ENCODE measurements at regions of chr22 and their contacts with region 1.

Region 1: DNA sequence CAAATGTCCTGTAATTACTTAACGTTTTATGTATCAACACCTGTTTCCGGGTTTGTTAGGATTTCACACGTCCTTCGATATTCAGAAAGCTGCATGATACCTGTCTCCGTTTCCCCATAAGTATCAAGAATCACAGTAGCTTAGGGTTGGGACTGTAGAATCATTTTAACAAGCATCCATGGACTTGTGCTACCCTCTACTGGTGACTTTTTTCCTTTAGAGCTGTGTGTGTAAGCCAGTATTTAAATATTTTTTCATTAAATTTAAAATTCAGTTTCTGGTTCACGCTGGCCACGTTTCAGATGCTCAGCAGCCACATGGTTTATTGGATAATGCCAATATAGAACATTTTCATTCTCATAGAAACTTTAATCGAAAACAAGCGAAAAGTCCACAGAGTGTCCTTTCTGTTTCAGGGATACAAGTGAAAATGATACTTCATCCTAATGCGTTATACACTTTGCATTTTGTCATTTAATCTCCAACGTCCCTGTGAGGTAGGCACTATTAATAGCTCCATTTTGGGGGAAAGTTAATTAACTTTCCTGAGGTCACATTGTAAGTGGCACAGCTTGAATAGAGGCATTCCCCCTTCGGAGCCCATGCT is 61.5 kb upstream of the SLC25A18 start:
- DNase-seq: peak; percentile 69
- ATAC-seq: peak; percentile 93
- H3K4me3 ChIP-seq: no peak overlapping the region
- H3K27ac ChIP-seq: no peak overlapping the region
- H3K4me1 ChIP-seq: no peaks in the 10 kb centered on the region
- H3K27me3 ChIP-seq: no peaks in the 10 kb centered on the region
- CTCF ChIP-seq: peak; percentile 55 to 69 (median 68); a peak in 5 of 6 replicates
- POLR2A ChIP-seq: no peak
- RAD21 ChIP-seq: peak; percentile 84

Region 2: DNA sequence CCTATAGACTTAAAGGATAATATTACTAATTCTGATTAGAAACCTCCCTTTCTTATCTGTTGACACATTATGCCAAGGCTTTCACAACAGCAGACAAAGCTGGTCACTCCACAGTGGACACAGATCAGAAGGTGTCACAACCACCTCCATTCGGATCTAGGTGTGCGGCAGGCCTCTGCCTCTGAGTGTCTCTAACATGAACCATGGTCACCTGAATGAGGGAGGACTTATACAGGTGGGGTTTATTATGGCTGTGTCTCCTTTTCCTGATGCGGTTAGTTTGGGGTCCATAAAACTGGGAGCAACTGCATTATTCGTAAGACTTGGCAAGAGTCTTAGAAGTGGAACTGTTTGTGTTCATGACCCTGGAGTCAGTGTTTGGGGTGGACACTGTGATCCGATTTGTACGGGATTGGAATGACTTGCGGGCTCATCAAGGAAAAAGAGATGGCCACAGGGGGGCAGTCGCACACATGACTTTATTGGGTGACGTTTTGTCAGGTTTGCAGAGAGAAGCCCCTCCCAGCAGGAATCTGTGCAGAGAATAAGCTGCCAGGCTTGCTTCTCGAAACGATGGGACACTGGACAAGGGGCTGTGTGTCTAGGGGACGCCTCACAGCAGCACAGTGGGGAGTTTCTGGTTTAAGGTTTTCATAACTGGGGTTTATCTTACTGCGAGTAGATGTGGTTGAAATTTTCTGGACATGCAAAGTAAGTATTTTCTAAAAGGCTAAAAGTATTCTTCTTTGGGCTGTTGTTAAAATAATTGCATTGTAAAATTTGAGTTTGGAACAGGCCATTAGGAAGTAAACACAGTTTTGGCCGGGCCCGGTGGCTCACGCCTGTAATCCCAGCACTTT is 584.4 kb before region 1 on chr22:
- CTCF ChIA-PET with region 1: interaction called, 7 read pairs
- POLR2A ChIA-PET with region 1: no interaction called
- RAD21 ChIA-PET with region 1: no interaction called
- intact Hi-C with region 1: loop called (anchors 5 kb)
- DNase-seq: peak; percentile 65
- ATAC-seq: peak; percentile 95
- H3K4me3 ChIP-seq: no peak overlapping the region
- H3K27ac ChIP-seq: no peak overlapping the region
- H3K4me1 ChIP-seq: peaks cover 4 to 6% of the 10 kb centered on the region in 2 experiments
- H3K27me3 ChIP-seq: peaks cover 9% of the 10 kb centered on the region; the same call in 1 of the 2 replicates
- CTCF ChIP-seq: peak; percentile 41 to 81 (median 79); a peak in 5 of 6 replicates
- POLR2A ChIP-seq: no peak
- RAD21 ChIP-seq: peak; percentile 51; the same call in 1 of the 2 replicates

Region 3: GRCh38 chr22:17077255-17077654 is 424.5 kb before region 1 on chr22:
- CTCF ChIA-PET with region 1: interaction called, 63 read pairs
- POLR2A ChIA-PET with region 1: no interaction called
- RAD21 ChIA-PET with region 1: interaction called, 4 to 9 read pairs
- intact Hi-C with region 1: loop called (anchors 1 kb)
- DNase-seq: no peak
- ATAC-seq: no peak; the same call in 1 of the 2 replicates
- H3K4me3 ChIP-seq: no peak overlapping the region
- H3K27ac ChIP-seq: no peak overlapping the region
- H3K4me1 ChIP-seq: peaks cover 9 to 24% of the 10 kb centered on the region in 2 experiments
- H3K27me3 ChIP-seq: no peaks in the 10 kb centered on the region
- CTCF ChIP-seq: no peak
- POLR2A ChIP-seq: no peak
- RAD21 ChIP-seq: no peak

Region 4: DNA sequence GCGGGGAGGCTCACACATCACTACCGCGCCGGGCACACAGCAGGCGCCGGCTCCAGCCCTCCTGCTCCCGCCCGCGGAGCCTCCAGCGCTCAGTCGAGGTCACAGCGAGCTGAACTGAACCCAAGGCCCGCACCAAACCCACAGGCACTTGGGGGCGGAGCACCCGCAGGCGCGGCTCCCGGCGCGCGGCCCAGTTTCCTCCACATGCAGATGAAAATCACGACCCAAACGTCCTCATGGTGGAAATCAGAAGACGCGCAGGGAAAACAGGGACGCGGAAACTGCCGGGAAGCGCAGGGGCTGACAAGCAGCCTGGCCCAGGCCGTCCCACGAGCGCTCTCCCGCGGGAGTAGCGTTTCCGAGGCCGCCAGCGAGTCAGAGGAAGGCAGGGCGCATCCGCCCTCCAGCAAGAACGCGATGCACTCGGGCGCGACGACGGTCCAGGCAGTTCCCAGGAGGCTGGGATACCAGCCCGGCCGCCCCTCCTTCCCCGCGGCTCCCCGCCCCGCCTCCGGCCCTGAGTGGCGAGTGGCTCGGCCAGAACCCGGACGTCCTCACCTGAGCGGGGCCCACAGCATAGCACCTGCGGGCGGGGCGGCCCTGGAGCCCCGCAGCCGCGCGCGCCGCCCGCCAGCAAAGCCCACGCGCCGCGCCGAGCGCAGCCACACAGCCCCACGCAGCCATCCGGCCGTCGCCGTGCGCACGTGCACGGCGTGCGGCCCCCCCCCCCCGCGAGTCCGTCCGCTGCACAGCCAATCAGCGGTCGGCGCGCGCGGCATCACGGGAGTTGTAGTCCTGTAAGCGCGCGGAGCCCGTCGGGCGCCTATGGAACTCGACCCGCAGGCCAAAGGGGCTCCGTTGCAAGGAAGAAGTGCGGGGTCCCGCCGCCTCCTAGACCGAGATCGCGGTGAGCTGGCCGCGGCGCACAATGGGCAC is 342.9 kb before region 1 on chr22 and contains the start of gene HDHD5:
- CTCF ChIA-PET with region 1: interaction called, 15 read pairs
- POLR2A ChIA-PET with region 1: no interaction called
- RAD21 ChIA-PET with region 1: interaction called, 4 read pairs
- intact Hi-C with region 1: loop called (anchors 5 kb)
- DNase-seq: peak; percentile 67
- ATAC-seq: peak; percentile 84
- H3K4me3 ChIP-seq: peak within 1 kb of the TSS; percentile 71 to 82
- H3K27ac ChIP-seq: peak within 1 kb of the TSS; percentile 94
- H3K4me1 ChIP-seq: peaks cover 16 to 27% of the 10 kb centered on the region in 2 experiments
- H3K27me3 ChIP-seq: no peaks in the 10 kb centered on the region
- CTCF ChIP-seq: no peak
- POLR2A ChIP-seq: peak; percentile 20
- RAD21 ChIP-seq: no peak
- total RNA-seq, gene HDHD5: 70.1 TPM

Region 5: GRCh38 chr22:17171313-17172171 is 330.2 kb before region 1 on chr22:
- CTCF ChIA-PET with region 1: interaction called, 116 read pairs
- POLR2A ChIA-PET with region 1: interaction called, 13 read pairs
- RAD21 ChIA-PET with region 1: interaction called, 8 to 13 read pairs
- intact Hi-C with region 1: loop called (anchors 1 kb)
- DNase-seq: peak; percentile 82
- ATAC-seq: peak; percentile 93
- H3K4me3 ChIP-seq: peak overlapping the region; percentile 62 to 69
- H3K27ac ChIP-seq: peak overlapping the region; percentile 98
- H3K4me1 ChIP-seq: peaks cover 10% of the 10 kb centered on the region in 2 experiments
- H3K27me3 ChIP-seq: no peaks in the 10 kb centered on the region
- CTCF ChIP-seq: peak; percentile 53 to 88 (median 68); a peak in 5 of 6 replicates
- POLR2A ChIP-seq: peak; percentile 55
- RAD21 ChIP-seq: peak; percentile 24

Region 6: DNA sequence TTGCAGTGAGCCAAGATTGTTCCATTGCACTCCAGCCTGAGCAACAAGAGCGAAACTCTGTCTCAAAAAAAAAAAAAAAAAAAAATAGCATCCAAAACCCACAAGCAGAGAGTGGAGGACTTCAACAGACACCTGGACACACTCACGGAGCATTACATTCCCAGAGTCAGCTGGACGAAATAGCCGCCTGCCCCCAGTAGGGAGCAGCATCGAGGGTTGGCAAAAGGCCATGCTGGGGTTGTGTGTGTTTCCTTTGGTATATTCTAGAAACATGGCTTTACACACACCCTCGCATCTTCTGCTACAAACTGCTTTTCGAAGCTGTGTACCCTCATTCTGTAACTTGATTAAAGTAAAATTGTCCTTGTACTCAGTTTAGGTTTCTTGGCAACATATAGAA is 287.8 kb before region 1 on chr22:
- CTCF ChIA-PET with region 1: interaction called, 38 read pairs
- POLR2A ChIA-PET with region 1: no interaction called
- RAD21 ChIA-PET with region 1: interaction called in 1 of 2 experiments, 3 read pairs
- intact Hi-C with region 1: loop called (anchors 1 kb)
- DNase-seq: peak; percentile 40
- ATAC-seq: peak; percentile 89
- H3K4me3 ChIP-seq: no peak overlapping the region
- H3K27ac ChIP-seq: no peak overlapping the region
- H3K4me1 ChIP-seq: peaks cover 0 to 3% of the 10 kb centered on the region in 2 experiments; a peak in 1 of 4 replicates
- H3K27me3 ChIP-seq: no peaks in the 10 kb centered on the region
- CTCF ChIP-seq: peak; percentile 12 to 73 (median 65); a peak in 4 of 6 replicates
- POLR2A ChIP-seq: no peak
- RAD21 ChIP-seq: peak; percentile 28